ENCODE measurements at regions of chr7 and their contacts with region 1.

Region 1: DNA sequence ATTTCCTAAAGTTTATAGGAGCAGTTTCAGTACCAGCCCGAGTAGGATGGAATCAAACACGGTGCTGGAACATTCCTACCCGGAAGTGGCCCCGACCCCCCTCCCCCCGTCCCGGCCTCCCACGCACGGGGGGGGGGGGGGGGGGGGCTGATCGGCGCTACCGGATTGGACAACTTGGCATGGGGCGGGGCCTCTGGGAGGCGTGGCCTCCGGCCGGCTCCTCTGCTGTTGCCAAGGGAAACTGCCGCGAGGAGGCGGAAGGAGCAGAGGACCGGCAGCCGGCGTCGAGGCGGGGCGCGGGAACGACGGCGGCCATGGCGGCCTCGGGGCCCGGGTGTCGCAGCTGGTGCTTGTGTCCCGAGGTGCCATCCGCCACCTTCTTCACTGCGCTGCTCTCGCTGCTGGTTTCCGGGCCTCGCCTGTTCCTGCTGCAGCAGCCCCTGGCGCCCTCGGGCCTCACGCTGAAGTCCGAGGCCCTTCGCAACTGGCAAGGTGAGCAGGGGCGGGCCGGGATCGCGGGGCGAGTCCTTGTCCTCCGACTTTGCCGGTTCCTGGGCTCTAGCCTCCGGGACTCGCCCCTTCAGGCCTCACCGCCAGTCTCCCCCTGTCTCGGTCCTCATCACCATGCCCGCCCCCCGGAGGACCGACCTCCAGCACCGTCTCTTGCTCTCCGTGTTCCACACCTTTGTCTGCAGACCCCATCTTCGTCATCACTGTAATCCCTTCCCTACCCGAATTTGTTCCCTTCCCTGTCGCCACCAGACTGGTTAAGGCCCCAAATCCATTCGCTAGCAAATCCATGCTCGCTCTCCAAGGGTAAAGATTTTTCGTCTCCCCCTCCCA is at the start of gene RHBDD2:
- DNase-seq: peak; percentile 90
- H3K4me3 ChIP-seq: peak within 1 kb of the TSS; percentile 75 to 100 (median 76)
- H3K27ac ChIP-seq: peak within 1 kb of the TSS; percentile 63
- H3K4me1 ChIP-seq: peaks cover 18% of the 10 kb centered on the region
- H3K27me3 ChIP-seq: no peaks in the 10 kb centered on the region
- CTCF ChIP-seq: peak in 1 of 2 donors; percentile 28
- total RNA-seq, gene RHBDD2: 51.9 to 52.0 TPM

Region 2: DNA sequence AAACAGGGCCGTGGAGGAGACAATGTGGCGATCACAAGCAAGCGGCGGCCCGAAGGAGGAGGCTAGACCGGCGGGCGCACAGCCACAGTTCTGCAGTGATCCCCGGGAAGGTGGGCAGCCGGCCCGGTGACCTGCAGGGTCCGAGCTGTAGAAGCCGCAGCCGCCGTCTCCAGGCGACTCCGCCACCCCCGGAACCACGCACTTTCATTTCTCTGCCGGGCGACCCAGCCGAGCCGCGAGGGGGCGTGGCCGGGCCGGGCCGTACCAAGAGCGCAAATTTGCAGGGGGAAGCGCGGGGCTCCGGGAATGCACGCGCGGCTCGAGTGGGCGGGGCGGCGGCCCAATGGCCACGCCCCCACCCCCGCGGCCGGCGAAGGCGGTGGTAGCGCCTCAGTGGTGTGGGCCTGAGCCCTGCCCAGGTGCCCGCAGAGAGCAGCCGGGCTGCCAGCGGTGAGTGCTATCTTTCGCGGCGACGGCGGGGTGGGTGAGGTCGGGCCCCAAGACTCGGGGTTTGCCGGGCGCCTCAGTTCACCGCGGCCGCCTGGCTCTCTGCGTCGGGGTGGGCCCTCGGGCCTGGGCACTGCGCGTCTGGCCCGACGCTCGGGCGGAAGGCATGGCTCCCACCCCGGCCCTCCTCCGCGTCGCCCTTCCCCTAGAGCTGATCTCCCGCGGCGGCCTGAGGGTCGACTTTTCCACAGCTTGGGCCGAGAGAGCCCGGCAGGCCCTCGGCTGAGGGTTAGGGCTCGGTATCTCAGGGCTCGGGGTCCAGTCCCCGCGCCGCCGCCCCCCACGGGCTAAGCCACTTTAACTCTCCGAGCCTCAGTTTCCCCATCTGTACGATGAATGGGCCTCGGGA is 36.0 kb after region 1 on chr7 and contains the start of gene POR:
- CTCF ChIA-PET with region 1: no interaction called
- dilution Hi-C with region 1: no loop called
- in situ Hi-C with region 1: no loop called
- intact Hi-C with region 1: loop called (anchors 2 kb)
- DNase-seq: peak; percentile 94
- H3K4me3 ChIP-seq: peak within 1 kb of the TSS; percentile 76 to 99 (median 96)
- H3K27ac ChIP-seq: peak within 1 kb of the TSS; percentile 68
- H3K4me1 ChIP-seq: peaks cover 10% of the 10 kb centered on the region
- H3K27me3 ChIP-seq: no peaks in the 10 kb centered on the region
- CTCF ChIP-seq: no peak
- total RNA-seq, gene POR: 61.2 to 67.9 TPM

Region 3: DNA sequence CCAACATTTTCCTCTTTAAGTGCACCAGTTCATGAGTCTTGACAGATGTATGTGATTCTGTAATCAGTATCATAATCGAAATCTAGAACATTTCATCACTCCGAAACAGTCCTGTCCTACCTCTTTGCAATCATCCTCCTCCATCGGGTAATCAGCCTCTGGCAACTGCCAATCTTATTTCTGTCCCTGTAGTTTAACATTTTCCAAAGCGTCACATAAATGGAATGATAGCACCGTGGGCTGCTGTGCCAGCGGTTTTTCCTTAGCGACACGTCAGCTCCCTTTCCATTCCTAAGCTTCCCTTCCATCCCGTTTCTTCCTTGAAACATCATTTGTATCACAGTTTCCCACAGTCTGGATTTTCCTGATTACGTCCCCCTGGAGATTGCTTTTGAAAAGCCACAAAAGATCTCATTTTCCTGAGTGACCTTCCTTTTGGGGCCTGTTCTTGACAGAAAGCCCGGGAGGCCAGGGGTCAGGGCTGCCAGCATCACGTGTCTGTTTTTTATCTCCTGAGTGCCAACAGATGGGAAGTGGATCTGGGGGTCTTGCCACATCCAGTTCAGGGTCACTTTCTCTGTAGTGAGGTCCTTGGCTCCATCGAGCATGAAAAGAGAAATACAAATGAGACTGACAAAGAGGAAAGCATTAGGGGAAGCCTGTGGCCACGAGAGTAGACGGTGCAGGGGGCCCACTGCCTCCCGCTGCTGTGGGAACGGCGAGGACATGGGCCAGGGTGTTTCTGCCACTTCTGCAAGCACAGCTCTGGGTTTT is 83.8 kb after region 1 on chr7:
- CTCF ChIA-PET with region 1: no interaction called
- dilution Hi-C with region 1: loop called (anchors 5 kb)
- in situ Hi-C with region 1: no loop called
- intact Hi-C with region 1: no loop called
- DNase-seq: no peak
- H3K4me3 ChIP-seq: no peak overlapping the region
- H3K27ac ChIP-seq: no peak overlapping the region
- H3K4me1 ChIP-seq: no peaks in the 10 kb centered on the region
- H3K27me3 ChIP-seq: no peaks in the 10 kb centered on the region
- CTCF ChIP-seq: no peak

Region 4: DNA sequence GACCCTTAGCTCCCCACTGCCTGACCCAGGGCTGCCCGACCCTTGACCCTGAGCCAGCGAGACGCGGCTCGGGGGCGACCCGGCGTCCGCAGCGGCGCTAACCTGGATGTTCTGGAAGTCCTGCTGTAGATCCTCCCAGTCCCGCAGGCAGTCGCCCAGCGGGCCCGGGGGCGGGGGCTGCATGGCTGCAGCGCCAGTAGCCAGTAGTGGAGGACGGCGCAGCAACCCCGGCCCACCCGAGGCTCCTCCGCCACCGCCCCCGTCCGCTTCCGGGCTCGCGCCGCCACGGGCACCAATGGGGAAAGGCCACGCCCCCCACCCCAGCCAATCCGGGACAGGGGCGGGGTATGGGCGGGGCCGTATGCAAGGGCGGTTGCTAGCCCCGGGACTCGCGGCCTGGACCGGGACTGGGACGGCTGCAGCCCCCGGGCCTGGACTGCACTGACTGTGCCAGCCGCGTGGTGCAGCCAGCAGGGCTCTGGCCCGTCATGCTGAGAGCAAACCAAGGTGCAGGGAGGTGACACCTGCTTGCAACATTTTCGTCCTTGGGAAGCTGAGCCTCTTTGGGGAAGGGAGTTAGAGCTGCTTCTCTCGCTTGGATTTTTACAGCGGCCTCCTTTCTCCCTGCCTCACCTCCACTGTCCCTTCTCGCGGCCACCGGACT is 115.5 kb after region 1 on chr7 and contains the start of gene TMEM120A:
- CTCF ChIA-PET with region 1: no interaction called
- dilution Hi-C with region 1: no loop called
- in situ Hi-C with region 1: no loop called
- intact Hi-C with region 1: loop called (anchors 1 kb)
- DNase-seq: peak; percentile 89
- H3K4me3 ChIP-seq: peak within 1 kb of the TSS; percentile 86 to 92 (median 90)
- H3K27ac ChIP-seq: no peak within 1 kb of the TSS
- H3K4me1 ChIP-seq: peaks cover 9% of the 10 kb centered on the region
- H3K27me3 ChIP-seq: no peaks in the 10 kb centered on the region
- CTCF ChIP-seq: peak in 1 of 2 donors; percentile 14
- total RNA-seq, gene TMEM120A: 15.8 to 30.3 TPM

Region 5: DNA sequence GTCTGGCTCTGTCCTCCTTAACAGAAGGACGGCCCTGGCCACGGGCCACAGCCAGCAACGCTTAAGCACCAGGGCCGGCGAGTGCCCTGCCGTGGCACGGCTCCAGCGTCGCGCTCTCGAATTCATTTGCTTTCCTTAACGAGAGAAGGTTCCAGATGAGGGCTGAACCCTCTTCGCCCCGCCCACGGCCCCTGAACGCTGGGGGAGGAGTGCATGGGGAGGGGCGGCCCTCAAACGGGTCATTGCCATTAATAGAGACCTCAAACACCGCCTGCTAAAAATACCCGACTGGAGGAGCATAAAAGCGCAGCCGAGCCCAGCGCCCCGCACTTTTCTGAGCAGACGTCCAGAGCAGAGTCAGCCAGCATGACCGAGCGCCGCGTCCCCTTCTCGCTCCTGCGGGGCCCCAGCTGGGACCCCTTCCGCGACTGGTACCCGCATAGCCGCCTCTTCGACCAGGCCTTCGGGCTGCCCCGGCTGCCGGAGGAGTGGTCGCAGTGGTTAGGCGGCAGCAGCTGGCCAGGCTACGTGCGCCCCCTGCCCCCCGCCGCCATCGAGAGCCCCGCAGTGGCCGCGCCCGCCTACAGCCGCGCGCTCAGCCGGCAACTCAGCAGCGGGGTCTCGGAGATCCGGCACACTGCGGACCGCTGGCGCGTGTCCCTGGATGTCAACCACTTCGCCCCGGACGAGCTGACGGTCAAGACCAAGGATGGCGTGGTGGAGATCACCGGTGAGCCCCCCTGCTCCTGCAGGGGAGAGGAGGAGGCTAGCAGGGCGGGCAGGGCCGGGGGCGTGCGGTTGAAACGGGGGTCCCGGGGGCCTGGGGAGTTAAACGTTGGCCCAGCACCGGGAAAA is 423.6 kb after region 1 on chr7 and contains the start of gene HSPB1:
- CTCF ChIA-PET with region 1: no interaction called
- dilution Hi-C with region 1: no loop called
- in situ Hi-C with region 1: loop called in 1 of 2 experiments (anchors 25 kb)
- intact Hi-C with region 1: loop called (anchors 5 kb)
- DNase-seq: peak; percentile 95
- H3K4me3 ChIP-seq: peak within 1 kb of the TSS; percentile 65 to 91 (median 78)
- H3K27ac ChIP-seq: peak within 1 kb of the TSS; percentile 66
- H3K4me1 ChIP-seq: peaks cover 57% of the 10 kb centered on the region
- H3K27me3 ChIP-seq: no peaks in the 10 kb centered on the region
- CTCF ChIP-seq: no peak
- total RNA-seq, gene HSPB1: 523 to 862 TPM

Measured in mammary epithelial cell (primary cell).